K562 (cell line): ENCODE measurements at regions of chr20 and their contacts with region 1.

Region 1: GRCh38 chr20:48635433-48636310 is 192.1 kb downstream of the PREX1 start:
- DNase-seq: peak; percentile 73 to 87 (median 84)
- ATAC-seq: peak; percentile 93
- H3K4me3 ChIP-seq: no peak overlapping the region
- H3K27ac ChIP-seq: no peak overlapping the region
- H3K4me1 ChIP-seq: peaks cover 0 to 20% of the 10 kb centered on the region in 2 experiments; a peak in 1 of 5 replicates
- H3K27me3 ChIP-seq: no peaks in the 10 kb centered on the region
- CTCF ChIP-seq: peak; percentile 89 to 96 (median 89)
- EP300 ChIP-seq: no peak
- POLR2A ChIP-seq: no peak
- RAD21 ChIP-seq: peak; percentile 65 to 85

Region 2: DNA sequence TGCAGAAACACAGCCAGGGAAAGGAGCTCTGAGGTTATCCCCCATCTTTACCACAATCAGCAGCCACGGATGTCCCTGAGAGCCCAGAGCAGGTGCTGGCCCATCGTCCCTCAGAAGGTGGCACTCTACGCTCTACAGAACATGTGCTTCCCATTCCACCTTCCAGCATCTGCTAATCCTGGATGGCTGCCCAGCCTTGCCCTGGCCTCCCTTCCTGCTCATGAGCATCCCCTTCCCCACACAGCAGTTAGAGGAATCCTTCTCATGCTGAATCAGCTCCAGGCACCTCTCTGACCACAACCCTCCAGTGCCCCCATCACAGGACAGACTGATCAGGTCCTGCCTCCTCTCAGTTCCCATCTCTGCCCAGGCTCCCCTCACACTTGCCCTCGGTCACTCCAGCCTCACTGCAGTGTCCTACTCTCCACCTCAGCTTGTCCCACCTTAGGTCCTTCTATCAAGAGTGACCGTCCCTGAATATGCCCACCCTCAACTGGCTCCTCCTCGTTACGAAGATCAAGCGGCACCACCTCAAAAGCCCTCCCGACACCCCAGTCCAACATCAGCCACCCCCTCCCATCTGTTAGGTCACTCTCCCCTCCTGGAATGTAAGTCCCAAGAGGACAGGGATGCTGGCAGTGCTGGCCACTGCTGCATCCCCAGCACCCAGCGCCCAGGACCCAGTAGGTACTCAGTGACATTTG is 90.5 kb before region 1 on chr20:
- CTCF ChIA-PET with region 1: no interaction called
- POLR2A ChIA-PET with region 1: no interaction called
- in situ Hi-C with region 1: no loop called
- intact Hi-C with region 1: no loop called
- DNase-seq: no peak
- ATAC-seq: no peak
- H3K4me3 ChIP-seq: no peak overlapping the region
- H3K27ac ChIP-seq: no peak overlapping the region
- H3K4me1 ChIP-seq: no peaks in the 10 kb centered on the region
- H3K27me3 ChIP-seq: peaks cover 0 to 31% of the 10 kb centered on the region in 2 experiments; a peak in 2 of 5 replicates
- CTCF ChIP-seq: no peak
- EP300 ChIP-seq: no peak
- POLR2A ChIP-seq: no peak
- RAD21 ChIP-seq: no peak

Region 3: DNA sequence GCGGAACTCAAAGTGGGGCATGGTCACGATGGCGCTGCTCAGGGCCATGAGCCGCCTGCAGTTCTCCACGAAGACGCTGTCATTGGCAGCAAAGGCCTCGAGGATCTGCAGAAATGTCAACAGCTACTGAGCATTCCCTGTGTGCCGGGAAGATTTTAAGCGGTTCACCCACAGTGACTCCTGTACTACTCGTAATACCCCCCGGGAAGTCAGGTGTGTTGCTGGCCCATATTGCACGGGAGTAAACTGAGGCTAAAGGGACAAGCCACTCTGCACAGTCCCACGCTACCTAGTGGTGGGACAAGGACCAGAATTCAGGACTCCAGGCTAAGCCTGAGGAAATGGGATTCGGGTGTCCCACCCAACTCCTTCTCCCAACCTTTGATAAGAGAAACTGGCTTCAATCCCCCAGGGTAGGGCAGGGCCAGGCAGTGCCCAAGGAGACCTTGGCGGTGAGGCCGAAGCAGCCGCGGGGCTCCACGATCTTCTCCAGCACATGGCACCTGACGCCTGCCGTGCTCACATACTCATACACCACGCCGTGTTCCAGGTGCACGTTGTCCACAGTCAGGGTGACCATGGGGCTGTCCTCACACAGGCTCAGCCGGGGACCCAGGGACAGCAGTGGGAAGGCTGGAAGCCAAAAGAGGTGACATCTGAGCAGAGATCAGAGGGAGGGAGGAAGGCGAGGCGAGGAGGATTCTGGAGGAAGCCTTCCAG is 15.4 kb after region 1 on chr20:
- CTCF ChIA-PET with region 1: no interaction called
- POLR2A ChIA-PET with region 1: no interaction called
- in situ Hi-C with region 1: no loop called
- intact Hi-C with region 1: no loop called
- DNase-seq: no peak
- ATAC-seq: no peak
- H3K4me3 ChIP-seq: no peak overlapping the region
- H3K27ac ChIP-seq: no peak overlapping the region
- H3K4me1 ChIP-seq: no peaks in the 10 kb centered on the region
- H3K27me3 ChIP-seq: no peaks in the 10 kb centered on the region
- CTCF ChIP-seq: no peak
- EP300 ChIP-seq: no peak
- POLR2A ChIP-seq: no peak
- RAD21 ChIP-seq: no peak

Region 4: DNA sequence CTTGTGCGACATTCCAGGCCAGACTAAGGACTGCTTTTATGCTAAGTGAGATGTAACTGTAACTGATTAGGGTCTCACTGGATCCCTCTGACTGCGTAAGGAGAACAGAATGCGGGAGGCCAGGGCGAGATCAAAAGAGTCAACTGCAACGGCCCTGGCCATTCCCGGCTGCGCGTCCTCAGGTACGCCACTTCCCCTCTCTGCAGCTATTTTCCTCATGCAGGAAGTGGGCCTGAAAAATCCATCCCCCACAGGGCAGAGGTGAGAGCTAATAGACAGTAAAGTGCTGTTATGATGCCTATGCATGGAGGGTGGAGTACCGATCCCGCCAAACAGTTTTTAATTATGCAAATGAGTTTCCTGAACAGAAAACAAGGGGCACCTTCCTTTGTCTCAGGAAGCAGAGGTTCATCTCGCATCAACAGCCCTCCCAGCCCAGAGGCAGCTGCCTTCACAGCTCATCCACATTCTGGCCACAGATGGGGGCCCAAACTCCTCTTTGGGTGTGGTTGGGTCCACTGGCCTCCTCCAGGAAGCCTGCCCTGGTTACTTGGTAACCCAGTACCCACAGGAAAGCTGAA is 182.8 kb after region 1 on chr20:
- CTCF ChIA-PET with region 1: no interaction called
- POLR2A ChIA-PET with region 1: no interaction called
- in situ Hi-C with region 1: no loop called
- intact Hi-C with region 1: no loop called
- DNase-seq: no peak
- ATAC-seq: no peak
- H3K4me3 ChIP-seq: no peak overlapping the region
- H3K27ac ChIP-seq: no peak overlapping the region
- H3K4me1 ChIP-seq: no peaks in the 10 kb centered on the region
- H3K27me3 ChIP-seq: peaks cover 3 to 8% of the 10 kb centered on the region in 2 experiments; a peak in 3 of 5 replicates
- CTCF ChIP-seq: no peak
- EP300 ChIP-seq: no peak
- POLR2A ChIP-seq: no peak
- RAD21 ChIP-seq: no peak

Region 5: DNA sequence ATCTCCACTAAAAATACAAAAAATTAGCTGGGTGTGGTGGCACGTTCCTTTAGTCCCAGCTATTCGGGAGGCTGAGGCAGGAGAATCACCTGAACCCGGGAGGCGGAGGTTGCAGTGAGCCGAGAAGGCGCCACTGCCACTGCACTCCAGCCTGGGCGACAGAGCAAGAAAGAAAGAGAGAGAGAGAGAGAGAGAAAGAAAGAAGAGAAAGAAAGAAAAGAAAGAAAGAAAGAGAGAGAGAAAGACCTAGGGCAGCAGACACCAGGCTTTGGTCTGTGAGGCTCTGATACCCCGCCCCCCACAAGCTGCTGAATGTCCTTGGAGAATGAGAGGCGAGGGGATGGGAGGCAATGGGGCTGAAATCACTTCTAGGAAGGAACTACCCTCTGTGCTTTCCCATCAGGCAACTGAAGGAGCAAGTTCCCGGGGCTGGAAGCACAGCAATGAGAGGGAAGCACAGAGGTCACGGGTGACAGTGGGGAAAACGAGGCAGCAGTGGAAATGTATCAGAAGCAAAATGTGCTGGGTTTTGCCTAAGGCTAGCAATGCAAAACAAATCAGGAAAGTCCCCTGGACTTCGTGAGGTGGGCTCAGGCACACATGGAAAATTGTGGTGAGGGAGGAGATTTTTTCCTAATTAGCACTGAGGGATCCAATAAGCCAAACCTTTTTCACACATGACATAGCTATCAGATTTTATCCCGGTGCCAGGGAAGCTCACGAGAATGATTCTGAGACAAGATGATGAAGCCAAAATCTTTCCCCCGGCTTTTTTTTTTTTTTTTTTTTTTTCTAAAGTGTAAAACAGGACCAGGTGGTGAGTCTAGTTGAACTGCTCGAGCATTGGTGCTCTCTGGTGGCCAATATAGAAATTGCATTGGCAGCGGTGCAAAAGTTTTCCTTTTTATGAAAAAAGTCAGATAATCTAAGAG is 269.0 kb after region 1 on chr20:
- CTCF ChIA-PET with region 1: interaction called, 20 read pairs
- POLR2A ChIA-PET with region 1: interaction called, 3 read pairs
- in situ Hi-C with region 1: no loop called
- intact Hi-C with region 1: loop called (anchors 1 kb)
- DNase-seq: peak; percentile 68 to 73 (median 70)
- ATAC-seq: peak; percentile 81
- H3K4me3 ChIP-seq: no peak overlapping the region
- H3K27ac ChIP-seq: no peak overlapping the region
- H3K4me1 ChIP-seq: no peaks in the 10 kb centered on the region
- H3K27me3 ChIP-seq: peaks cover 14 to 28% of the 10 kb centered on the region in 2 experiments
- CTCF ChIP-seq: peak; percentile 76 to 91 (median 76)
- EP300 ChIP-seq: no peak
- POLR2A ChIP-seq: no peak
- RAD21 ChIP-seq: peak; percentile 87

Region 6: DNA sequence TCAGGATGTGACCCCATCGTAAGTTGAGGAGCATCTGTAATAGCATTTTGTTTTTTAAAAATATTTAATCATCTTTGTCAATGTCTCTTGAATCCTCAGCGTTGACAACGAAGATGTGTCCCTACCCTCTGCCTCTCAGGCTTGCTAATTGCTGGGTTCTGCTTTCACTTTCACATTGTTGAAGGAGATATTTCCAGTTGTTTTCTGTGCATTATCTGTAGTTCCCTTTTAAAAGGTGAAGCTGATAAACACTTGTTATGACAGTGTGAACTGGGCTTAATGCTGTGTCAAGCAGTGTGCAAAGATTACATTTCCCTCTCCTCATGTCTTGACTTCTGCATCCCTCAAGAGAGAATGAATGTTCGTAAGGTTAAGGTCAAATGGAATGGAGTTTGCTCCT is 465.3 kb after region 1 on chr20:
- CTCF ChIA-PET with region 1: no interaction called
- POLR2A ChIA-PET with region 1: no interaction called
- in situ Hi-C with region 1: no loop called
- intact Hi-C with region 1: loop called (anchors 10 kb)
- DNase-seq: no peak
- ATAC-seq: no peak
- H3K4me3 ChIP-seq: no peak overlapping the region
- H3K27ac ChIP-seq: no peak overlapping the region
- H3K4me1 ChIP-seq: no peaks in the 10 kb centered on the region; a peak in 1 of 5 replicates
- H3K27me3 ChIP-seq: no peaks in the 10 kb centered on the region
- CTCF ChIP-seq: no peak
- EP300 ChIP-seq: no peak
- POLR2A ChIP-seq: no peak
- RAD21 ChIP-seq: no peak